ENCODE measurements at regions of chr5 and their contacts with region 1.

Region 1: DNA sequence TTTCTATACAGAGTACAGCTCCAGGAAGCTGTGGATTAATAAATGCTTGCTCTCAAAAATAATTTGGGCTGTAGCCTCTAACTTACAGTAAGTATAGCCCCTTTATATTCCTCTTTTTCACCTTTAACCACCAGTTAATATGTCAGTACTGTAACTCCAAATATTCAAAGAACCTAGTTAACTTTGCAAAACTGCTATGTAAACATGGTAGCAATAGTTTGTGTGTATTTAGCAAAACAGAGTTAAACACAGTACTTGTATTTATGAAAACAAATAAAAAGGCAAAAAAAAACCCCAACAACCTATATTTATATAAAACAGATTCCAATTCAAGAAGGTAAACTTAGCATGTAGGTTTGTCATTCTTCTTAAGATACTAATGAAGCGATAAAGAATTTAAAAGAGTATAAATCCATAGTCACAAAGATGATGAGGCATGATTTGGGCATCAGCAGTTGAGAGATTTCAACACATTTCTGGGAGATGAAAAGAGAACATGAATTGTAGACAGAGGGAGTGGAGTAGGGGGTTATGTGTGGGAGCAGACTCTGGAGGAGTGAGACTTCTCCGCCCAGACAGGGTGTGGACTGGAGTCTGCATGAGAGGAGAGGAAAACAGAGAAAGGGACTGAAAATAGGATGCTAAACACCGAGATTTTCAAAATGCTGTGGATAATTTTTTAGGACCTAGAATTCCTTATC is 47.0 kb upstream of the F2RL1 start:
- DNase-seq: no peak
- H3K4me3 ChIP-seq: no peak overlapping the region
- H3K27ac ChIP-seq: no peak overlapping the region
- H3K4me1 ChIP-seq: no peaks in the 10 kb centered on the region
- H3K27me3 ChIP-seq: no peaks in the 10 kb centered on the region
- CTCF ChIP-seq: no peak
- EP300 ChIP-seq: no peak
- RAD21 ChIP-seq: no peak

Region 2: DNA sequence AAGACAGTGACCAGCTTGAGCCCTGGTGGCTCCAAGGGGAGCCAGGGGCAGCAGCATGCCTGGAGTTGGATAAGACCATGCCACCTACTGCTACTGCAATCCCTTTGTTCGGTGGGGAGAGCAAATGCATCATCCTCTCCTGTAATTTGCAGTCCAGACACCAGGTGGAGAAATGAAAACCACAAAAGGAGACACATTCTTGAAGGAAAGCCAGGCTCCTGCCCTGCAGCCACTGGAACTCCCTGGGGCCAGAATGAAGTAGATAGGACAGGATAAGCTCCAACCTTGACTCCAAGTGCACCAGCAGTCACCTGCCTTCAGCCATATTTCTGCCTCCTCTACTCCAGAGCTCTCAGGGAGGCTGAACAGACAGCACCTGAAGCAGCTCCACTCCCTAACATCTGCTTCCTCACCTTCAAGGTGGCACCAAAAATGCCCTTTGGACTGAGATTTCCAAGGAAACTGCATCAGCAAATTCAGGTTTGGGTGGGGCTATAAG is 433.9 kb before region 1 on chr5:
- CTCF ChIA-PET with region 1: no interaction called
- POLR2A ChIA-PET with region 1: no interaction called
- DNase-seq: peak; percentile 52
- H3K4me3 ChIP-seq: no peak overlapping the region
- H3K27ac ChIP-seq: no peak overlapping the region
- H3K4me1 ChIP-seq: peaks cover 0 to 8% of the 10 kb centered on the region in 2 experiments; a peak in 1 of 4 replicates
- H3K27me3 ChIP-seq: no peaks in the 10 kb centered on the region
- CTCF ChIP-seq: peak; percentile 49
- EP300 ChIP-seq: no peak
- RAD21 ChIP-seq: peak; percentile 46

Region 3: GRCh38 chr5:76601470-76601869 is 170.4 kb before region 1 on chr5:
- CTCF ChIA-PET with region 1: interaction called, 146 read pairs
- POLR2A ChIA-PET with region 1: no interaction called
- DNase-seq: peak; percentile 49
- H3K4me3 ChIP-seq: no peak overlapping the region
- H3K27ac ChIP-seq: no peak overlapping the region
- H3K4me1 ChIP-seq: peaks cover 0 to 8% of the 10 kb centered on the region in 2 experiments; a peak in 3 of 4 replicates
- H3K27me3 ChIP-seq: no peaks in the 10 kb centered on the region
- CTCF ChIP-seq: peak; percentile 82
- EP300 ChIP-seq: no peak
- RAD21 ChIP-seq: peak; percentile 87

Region 4: DNA sequence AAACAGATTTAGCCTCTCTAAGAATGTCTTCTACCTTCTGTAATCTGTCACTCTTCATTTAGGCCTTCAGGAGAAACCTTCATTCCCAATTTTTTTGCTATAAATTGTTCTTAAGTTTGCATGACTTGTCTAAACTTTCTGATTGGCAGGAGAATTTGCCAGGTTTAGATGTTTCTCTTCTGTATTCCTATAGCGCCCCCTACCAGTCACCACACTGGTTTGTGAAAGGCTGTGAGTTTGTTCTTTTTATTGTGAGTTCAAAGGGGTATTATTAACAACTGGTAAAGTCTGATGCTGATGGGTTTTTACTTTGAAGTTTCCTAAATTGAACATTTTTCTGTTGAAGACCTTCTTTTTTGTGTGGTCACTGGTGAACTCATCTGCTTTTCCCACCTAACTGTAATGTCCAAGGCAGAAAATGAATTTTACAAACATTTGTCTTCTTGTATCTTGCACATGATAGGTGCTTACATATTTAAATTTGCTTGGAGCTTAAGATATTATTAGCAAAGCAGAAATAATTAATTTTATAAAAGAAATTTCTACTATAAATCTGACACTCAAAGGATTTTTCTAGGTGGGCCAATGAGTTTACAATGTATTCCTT is 130.2 kb before region 1 on chr5:
- CTCF ChIA-PET with region 1: interaction called, 11 read pairs
- POLR2A ChIA-PET with region 1: no interaction called
- DNase-seq: peak; percentile 39
- H3K4me3 ChIP-seq: peak overlapping the region in 1 of 2 experiments; percentile 33; a peak in 1 of 4 replicates
- H3K27ac ChIP-seq: no peak overlapping the region
- H3K4me1 ChIP-seq: peaks cover 0 to 16% of the 10 kb centered on the region in 2 experiments; a peak in 3 of 4 replicates
- H3K27me3 ChIP-seq: no peaks in the 10 kb centered on the region
- CTCF ChIP-seq: peak; percentile 93
- EP300 ChIP-seq: no peak
- RAD21 ChIP-seq: peak; percentile 88

Region 5: GRCh38 chr5:76720988-76721569 is 50.8 kb before region 1 on chr5:
- CTCF ChIA-PET with region 1: interaction called, 16 read pairs
- POLR2A ChIA-PET with region 1: no interaction called
- DNase-seq: no peak
- H3K4me3 ChIP-seq: no peak overlapping the region
- H3K27ac ChIP-seq: no peak overlapping the region
- H3K4me1 ChIP-seq: peaks cover 16 to 26% of the 10 kb centered on the region in 2 experiments; a peak in 3 of 4 replicates
- H3K27me3 ChIP-seq: no peaks in the 10 kb centered on the region
- CTCF ChIP-seq: no peak
- EP300 ChIP-seq: no peak
- RAD21 ChIP-seq: no peak

Region 6: DNA sequence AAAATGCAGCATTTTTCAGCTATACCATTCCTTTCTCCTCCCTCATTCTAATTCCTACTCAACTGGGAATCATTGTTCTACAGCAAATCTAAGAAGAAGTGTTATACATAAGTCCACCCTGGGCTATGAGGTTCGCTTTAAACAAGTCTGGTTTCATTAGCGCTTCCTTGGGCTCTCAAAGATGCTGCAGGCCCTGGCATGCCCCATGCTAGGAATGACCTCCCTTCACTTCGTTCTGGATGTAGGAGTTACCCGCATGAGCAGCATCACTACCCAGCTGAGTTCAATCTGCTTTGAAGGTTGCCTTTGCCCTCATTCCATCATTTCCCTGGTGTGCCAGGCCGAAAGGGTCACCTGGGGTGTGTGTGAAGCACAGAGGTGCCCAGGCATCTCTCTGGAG is 20.6 kb before region 1 on chr5:
- CTCF ChIA-PET with region 1: interaction called, 11 read pairs
- POLR2A ChIA-PET with region 1: no interaction called
- DNase-seq: no peak
- H3K4me3 ChIP-seq: no peak overlapping the region
- H3K27ac ChIP-seq: no peak overlapping the region
- H3K4me1 ChIP-seq: no peaks in the 10 kb centered on the region
- H3K27me3 ChIP-seq: no peaks in the 10 kb centered on the region
- CTCF ChIP-seq: no peak
- EP300 ChIP-seq: no peak
- RAD21 ChIP-seq: no peak

Region 7: DNA sequence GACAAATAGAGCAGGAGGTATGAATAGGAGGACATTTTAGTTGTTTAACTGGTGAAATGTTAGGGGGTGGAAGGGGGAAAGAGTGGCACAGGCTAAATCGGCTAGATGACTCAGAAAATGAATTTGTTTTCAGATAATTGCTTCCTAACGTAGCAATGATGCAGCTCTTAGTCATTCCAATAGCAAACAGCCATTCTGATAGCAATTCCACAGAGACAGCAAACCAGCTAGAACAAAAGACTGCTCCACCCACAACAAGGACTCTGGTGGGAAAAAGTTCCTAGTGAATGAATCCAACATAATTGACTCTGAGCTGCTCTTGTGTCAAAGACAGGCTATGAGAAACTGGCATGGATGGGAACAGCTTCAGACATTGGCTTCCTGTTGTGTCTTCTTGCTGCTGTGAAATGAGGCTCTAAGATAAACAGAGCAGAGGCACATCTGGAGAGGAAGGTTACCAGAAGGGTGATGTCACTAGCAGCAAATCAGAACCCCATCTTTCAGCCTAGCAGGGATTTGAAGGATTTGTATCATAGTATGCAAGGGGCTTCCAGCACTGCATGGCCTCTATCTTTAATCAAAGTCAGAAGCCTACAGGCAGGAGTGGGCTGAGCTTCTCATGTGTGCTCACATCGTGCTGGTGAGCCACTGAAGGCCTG is 18.9 kb after region 1 on chr5:
- CTCF ChIA-PET with region 1: interaction called, 20 read pairs
- POLR2A ChIA-PET with region 1: no interaction called
- DNase-seq: peak; percentile 52
- H3K4me3 ChIP-seq: no peak overlapping the region
- H3K27ac ChIP-seq: peak overlapping the region; percentile 64 to 100
- H3K4me1 ChIP-seq: peaks cover 5 to 29% of the 10 kb centered on the region in 2 experiments; a peak in 3 of 4 replicates
- H3K27me3 ChIP-seq: no peaks in the 10 kb centered on the region
- CTCF ChIP-seq: no peak
- EP300 ChIP-seq: peak in 1 of 2 experiments; percentile 88; a peak in 2 of 4 replicates
- RAD21 ChIP-seq: no peak